ENCODE measurements at regions of chr12 and their contacts with region 1.

Region 1: DNA sequence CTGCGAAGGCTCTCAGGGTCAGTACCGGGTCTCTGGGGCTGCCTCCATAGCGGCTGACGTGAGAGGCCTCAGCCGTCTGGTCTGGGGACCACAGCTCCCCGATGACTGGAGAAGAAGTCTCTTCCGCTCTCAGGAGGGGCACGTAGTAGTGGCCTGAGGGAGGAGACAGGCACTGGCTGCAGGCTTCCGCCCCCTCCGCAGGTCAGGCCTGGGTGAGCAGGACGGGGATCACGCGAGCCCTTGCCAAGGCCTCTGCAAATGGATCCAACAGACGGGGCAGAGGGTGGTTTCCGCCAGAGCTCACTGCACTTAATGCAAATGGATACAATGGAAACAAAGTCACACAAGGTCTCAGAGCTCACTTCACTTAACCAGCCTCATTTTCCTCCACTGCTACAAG is 24.7 kb downstream of the ANKLE2 start:
- DNase-seq: no peak
- H3K4me3 ChIP-seq: no peak overlapping the region
- CTCF ChIP-seq: no peak

Region 2: DNA sequence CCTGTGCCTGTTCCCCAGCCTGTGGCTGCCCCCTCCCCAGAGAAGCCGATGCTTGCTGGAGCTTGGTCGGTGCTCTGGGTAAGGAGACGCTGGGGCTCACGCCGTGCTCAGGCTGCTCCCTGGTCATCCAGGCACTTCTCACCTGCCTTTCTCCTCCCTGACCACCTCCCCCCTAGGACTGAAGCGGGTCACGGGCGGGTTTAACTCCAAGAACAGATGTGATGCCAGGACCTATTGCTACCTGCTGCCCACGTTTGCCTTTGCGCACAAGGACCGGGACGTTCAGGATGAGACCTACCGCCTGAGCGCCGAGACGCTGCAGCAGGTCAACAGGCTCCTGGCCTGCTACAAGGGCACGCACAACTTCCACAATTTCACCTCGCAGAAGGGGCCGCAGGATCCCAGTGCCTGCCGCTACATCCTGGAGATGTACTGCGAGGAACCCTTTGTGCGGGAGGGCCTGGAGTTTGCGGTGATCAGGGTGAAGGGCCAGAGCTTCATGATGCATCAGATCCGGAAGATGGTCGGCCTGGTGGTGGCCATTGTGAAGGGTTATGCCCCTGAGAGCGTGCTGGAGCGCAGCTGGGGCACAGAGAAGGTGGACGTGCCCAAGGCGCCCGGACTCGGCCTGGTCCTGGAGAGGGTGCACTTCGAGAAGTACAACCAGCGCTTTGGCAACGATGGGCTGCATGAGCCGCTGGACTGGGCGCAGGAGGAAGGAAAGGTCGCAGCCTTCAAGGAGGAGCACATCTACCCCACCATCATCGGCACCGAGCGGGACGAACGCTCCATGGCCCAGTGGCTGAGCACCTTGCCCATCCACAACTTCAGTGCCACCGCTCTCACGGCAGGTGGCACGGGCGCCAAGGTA is 795.6 kb before region 1 on chr12:
- in situ Hi-C with region 1: no loop called
- DNase-seq: no peak
- H3K4me3 ChIP-seq: no peak overlapping the region
- CTCF ChIP-seq: no peak

Region 3: DNA sequence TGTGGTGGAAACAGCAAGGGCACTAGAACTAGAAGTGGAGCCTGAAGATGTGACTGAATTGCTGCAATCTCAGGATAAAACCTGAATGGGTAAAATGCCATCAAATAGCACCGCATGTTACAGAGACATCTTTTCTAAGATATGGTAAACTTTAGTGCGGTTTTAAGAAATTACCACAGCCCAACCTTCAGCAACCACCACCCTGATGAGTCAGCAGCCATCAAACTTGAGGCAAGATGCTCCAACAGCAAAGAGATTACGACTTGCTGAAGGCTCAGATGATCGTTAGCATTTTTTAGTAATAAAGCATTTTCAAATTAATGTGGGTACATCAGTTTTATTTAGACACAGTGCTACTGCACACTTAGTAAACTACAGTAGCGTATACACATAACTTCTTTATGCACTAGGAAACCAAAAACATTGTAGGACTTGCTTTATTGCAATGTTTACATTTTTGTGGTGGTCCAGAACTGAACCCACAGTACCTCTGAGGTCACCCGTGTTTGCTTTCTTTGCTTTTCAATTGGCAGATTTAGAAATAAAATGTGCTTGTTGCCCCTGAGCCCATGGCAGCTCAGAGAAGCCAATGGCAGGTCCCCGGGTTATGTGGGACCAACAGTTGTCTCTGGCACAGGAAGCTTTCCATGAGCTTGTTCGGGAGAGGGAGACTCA is 75.9 kb after region 1 on chr12:
- in situ Hi-C with region 1: loop called (anchors 5 kb)
- DNase-seq: peak; percentile 31
- H3K4me3 ChIP-seq: no peak overlapping the region
- CTCF ChIP-seq: no peak